ENCODE measurements at regions of chr15 and their contacts with region 1.

Region 1: DNA sequence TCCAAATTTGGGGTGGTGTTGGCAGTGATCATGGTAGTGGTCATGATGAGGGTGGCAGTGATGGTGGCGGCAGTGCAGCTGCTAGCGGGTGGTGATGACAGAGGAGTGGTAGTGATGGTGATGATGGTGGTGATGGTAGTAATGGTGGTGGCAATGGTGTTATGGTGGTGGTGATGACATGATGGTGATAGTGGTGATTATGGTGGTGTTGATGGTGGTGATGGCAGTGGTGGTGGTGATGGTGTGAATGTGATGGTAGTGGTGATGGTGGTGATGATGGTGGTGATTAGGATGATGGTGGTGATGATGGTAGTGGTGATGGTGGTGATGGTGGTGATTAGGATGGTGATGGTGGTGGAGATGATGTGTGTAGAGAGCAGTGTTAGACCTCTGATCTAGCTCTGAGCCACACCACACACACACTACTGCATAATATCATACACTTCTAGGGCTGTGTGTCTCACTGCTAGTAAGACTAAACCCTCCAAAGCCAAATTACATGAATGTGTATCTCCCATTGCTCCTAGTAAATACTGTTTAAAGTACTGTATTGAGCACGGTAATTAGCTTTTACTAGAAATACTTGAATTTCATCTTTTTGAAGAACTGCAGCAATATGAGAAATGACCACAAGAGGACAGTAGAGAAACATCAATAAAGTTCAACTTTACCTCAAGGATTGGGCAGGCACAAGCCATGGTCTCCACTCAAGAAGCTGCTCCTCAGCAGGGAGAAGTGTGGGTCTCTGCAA is 28.8 kb downstream of the TMED3 start:
- DNase-seq: peak; percentile 40
- CTCF ChIP-seq: peak; percentile 45

Region 2: DNA sequence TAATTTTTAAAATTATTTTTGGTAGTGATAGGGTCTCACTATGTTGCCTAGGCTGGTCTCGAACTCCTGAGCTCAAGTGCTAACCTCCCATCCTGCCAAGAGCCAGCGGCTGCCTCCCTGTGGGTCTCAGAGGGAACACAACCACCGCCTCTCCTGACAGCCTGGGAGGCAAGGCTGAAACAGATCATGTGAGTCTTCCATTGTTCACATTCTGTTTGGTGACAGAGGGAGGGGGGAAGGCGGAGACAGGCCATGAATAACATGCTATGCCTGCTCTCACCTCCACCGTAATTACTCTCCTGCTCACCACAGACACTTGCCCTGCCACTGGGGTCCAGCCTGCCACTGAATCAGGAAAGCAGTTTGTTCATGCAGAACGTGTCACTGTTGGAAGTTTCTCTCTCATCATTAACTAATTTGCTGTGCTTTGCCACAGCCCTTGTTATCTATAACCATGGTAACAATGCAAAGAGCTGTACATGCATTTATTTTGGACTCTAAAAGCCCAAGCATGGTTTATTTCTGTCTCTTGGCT is 170.8 kb before region 1 on chr15:
- CTCF ChIA-PET with region 1: no interaction called
- POLR2A ChIA-PET with region 1: no interaction called
- DNase-seq: no peak
- CTCF ChIP-seq: no peak

Region 3: DNA sequence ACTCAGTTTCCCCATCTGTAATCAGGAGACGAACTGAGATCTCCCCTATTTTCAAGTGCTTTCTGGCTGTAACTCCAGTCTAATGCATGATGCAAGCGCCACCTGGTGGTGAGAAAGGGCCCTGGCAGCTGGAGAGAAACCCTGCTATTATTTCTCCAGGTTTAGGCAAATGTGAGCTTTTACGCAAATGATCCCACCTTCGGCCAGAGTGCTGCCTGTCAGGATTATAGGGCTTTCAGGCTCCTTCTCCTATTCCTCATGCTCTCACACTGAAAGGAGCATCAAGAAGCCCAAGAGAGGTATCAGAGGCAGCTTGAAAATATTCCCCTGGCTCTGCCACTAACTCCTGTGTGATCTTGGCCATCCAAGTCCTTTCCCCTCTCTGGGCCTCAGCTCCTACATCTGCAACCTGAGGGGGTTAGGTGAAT is 155.3 kb before region 1 on chr15:
- CTCF ChIA-PET with region 1: no interaction called
- POLR2A ChIA-PET with region 1: no interaction called
- DNase-seq: peak; percentile 74
- CTCF ChIP-seq: peak; percentile 96

Region 4: DNA sequence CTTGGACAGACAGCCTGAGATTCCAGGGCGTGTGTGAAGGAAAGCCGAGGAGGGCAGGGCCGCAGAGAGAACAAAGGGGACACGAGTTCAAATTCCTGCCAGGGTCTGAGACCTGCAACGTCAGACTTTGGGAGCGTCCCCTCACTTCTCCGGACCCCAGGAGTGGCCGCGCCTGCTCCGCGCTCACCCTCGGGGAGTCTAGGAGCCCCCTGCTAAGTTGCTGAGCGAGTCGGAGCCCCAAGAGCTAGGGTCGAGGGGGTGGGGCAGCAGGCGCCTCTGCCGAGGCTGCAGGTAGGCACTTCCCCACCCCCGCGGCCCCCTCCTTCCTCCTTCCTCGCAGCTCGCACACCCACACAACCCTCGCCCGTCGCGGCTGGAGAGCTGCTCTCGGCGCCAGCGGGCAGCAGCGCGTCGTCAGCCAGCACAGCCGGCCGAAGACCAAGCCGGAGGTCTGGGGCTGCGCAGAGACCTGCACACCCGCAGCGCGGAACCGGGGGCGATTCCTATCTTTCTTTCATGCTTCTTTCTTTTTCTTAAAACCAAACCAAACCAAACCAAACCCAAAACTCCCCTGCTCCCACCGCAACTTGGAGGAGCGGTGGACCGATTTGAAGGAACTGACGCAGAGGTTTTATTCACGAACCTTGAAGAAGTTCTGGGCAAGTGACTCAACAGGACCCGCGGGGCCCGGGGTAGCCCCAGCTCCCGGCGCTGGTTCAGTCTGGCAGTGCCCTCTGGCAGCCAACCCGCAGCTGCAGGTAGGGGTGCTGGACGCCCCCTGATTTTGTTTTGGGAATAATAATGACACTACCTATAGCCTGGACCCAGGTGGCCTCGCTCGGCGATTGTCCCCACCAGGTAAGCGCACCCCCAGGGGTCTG is 57.1 kb before region 1 on chr15 and contains the start of gene ANKRD34C:
- CTCF ChIA-PET with region 1: no interaction called
- POLR2A ChIA-PET with region 1: no interaction called
- DNase-seq: peak; percentile 14
- CTCF ChIP-seq: no peak

Region 5: DNA sequence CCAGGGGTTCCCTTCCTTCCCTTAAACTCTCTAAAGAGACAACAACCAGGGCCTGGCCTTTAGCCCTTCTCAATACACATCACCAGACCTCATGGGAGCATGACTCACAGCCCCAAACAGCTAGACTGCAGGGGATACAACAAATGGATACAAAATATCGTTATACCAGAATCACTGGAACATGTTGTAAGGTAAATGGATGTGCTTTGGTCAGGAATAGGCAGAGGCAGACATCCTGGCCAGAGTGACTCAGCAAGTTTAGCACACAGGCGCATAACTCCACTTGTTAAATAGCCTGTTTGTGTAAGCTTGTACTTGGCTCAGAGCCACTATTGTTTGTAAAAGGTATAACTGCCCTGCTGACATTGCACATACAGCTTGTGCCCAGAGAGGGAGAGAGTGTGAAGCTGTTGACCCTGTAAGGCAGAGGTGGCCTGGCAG is 10.5 kb before region 1 on chr15:
- CTCF ChIA-PET with region 1: interaction called, 13 read pairs
- POLR2A ChIA-PET with region 1: no interaction called
- DNase-seq: no peak
- CTCF ChIP-seq: no peak

Region 6: DNA sequence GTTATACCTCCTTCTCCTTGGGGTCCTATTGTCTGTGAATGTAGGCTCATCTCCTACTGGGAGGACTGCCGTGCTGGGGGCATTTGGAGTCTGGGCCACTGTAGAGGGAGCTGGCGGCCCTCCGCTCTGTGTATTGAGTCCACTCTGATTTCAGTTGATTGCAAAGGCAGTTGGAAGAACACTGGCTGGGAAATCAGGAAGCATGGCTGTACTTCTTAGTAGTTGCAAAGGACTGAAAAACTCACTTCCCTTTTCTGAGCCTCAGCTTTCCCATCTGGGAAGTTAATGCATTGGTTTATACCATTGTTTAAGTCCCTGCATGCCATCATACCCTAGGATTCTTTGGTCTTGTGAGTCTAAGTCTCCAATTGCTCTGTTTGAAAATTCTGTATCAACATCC is 17.8 kb after region 1 on chr15:
- CTCF ChIA-PET with region 1: interaction called, 46 read pairs
- POLR2A ChIA-PET with region 1: no interaction called
- DNase-seq: no peak
- CTCF ChIP-seq: no peak

Region 7: DNA sequence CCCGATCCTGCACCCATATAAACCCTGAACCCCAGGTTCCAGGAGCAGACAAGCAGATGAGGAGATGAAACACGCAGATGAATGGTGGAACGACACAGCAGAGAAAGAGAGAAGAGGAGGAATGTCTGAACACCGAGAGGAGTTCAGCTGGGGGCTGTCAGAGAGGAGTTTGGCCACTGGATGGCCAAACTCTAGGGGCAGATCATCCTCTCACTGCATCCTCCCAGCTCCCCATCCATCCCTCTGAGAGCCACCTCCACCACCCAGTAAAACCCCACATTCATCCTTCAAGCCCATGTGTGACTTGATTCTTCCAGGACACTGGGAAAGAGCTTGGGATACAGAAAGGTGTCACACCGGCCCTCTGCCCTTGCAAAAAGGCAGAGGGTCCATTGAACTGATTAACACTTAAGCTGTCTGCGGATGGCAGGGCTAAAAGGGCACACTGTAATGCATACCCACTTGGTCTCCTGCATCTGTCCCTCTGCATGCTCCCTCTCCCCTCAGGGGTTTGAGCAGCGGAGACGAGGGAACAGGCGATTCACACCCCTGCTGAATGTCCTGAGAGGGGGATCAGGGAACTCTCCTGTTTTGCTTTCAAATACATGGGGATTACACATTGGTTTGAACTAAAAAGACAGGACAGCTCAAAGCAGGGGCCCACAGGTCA is 25.0 kb after region 1 on chr15:
- CTCF ChIA-PET with region 1: interaction called, 14 read pairs
- POLR2A ChIA-PET with region 1: no interaction called
- DNase-seq: no peak
- CTCF ChIP-seq: no peak

Region 8: GRCh38 chr15:79596051-79596507 is 256.3 kb after region 1 on chr15:
- CTCF ChIA-PET with region 1: interaction called, 84 read pairs
- POLR2A ChIA-PET with region 1: no interaction called
- DNase-seq: peak; percentile 86
- CTCF ChIP-seq: peak; percentile 89